Left cardiac atrium (tissue), 4 donors: ENCODE measurements at regions of chr18 and their contacts with region 1.

Region 1: GRCh38 chr18:61581578-61582201 is 248.5 kb downstream of the CDH20 start:
- DNase-seq: peak; percentile 79
- ATAC-seq: peak; percentile 88 to 96

Region 2: GRCh38 chr18:61448316-61448715 is 133.4 kb before region 1 on chr18:
- intact Hi-C with region 1: no loop called
- DNase-seq: no peak
- ATAC-seq: no peak

Region 3: GRCh38 chr18:61635901-61636528 is 54.3 kb after region 1 on chr18:
- intact Hi-C with region 1: loop called in 1 of 2 experiments (anchors 5 kb)
- DNase-seq: peak; percentile 44
- ATAC-seq: peak; percentile 82 to 88